ENCODE measurements at regions of chr22 and their contacts with region 1.

Region 1: DNA sequence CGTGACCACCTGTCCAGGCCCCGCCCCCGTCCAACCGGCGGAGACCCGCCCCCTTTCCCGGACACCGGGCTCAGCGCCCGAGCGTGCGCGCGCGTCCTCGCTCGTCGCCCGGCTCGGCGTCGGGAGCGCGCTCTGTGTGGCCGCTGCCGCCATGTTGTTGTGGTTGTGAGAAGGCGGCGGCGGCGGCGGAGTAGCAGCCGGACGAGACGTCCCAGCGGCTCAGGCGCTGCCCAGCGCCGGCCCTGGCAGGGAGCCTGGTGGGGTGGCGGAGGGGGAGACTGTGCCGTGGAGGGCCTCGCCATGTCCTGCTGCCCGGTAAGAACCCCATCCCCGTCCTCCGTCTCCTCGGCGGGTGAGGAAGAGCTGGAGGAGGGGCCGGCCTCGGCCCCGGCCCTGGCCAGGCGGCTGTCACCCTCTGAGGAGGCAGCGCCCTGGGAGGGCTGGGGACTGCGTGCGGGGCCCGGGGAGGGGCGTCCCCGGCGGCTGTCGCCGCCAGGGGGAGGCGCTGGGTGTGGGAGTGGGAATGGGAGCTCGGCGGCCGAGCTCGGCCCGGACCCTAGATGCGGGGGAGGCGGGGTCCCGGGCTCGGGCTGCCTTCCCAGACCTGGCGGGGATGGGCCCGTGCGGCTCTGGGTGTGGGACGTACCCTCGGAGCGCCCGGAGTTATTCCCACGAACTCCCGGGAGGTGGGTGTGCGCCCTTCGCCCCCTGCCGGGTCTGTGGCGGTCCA is at the start of gene MTMR3:
- DNase-seq: peak; percentile 93 to 97
- H3K4me3 ChIP-seq: peak within 1 kb of the TSS; percentile 81
- H3K4me3 Mint-ChIP-seq: peak within 1 kb of the TSS; percentile 74
- H3K27ac Mint-ChIP-seq: no peak within 1 kb of the TSS
- H3K4me1 ChIP-seq: 0 out of 2 replicates have a peak, but pooled peaks cover 3% of the 10 kb centered on the region
- H3K4me1 Mint-ChIP-seq: no peaks in the 10 kb centered on the region
- H3K27me3 ChIP-seq: no peaks in the 10 kb centered on the region
- H3K27me3 Mint-ChIP-seq: no peaks in the 10 kb centered on the region
- CTCF ChIP-seq: peak; percentile 47 to 57
- total RNA-seq, gene MTMR3: 27.3 and 30.2 TPM in 2 replicates

Region 2: GRCh38 chr22:29670626-29671025 is 212.6 kb before region 1 on chr22:
- CTCF ChIA-PET with region 1: no interaction called
- POLR2A ChIA-PET with region 1: no interaction called
- intact Hi-C with region 1: no loop called
- DNase-seq: no peak
- H3K4me3 ChIP-seq: no peak overlapping the region
- H3K4me3 Mint-ChIP-seq: no peak overlapping the region
- H3K27ac Mint-ChIP-seq: no peak overlapping the region
- H3K4me1 ChIP-seq: no peaks in the 10 kb centered on the region
- H3K4me1 Mint-ChIP-seq: no peaks in the 10 kb centered on the region
- H3K27me3 ChIP-seq: no peaks in the 10 kb centered on the region
- H3K27me3 Mint-ChIP-seq: no peaks in the 10 kb centered on the region
- CTCF ChIP-seq: no peak

Region 3: GRCh38 chr22:29837780-29838598 is 45.2 kb before region 1 on chr22 and contains the start of gene ASCC2:
- CTCF ChIA-PET with region 1: interaction called, 15 read pairs
- POLR2A ChIA-PET with region 1: interaction called, 5 read pairs
- intact Hi-C with region 1: no loop called
- DNase-seq: peak; percentile 98
- H3K4me3 ChIP-seq: peak within 1 kb of the TSS; percentile 97
- H3K4me3 Mint-ChIP-seq: peak within 1 kb of the TSS; percentile 83
- H3K27ac Mint-ChIP-seq: peak within 1 kb of the TSS; percentile 69
- H3K4me1 ChIP-seq: peaks cover 5% of the 10 kb centered on the region; the same call in 1 of the 2 replicates
- H3K4me1 Mint-ChIP-seq: peaks cover 10% of the 10 kb centered on the region
- H3K27me3 ChIP-seq: no peaks in the 10 kb centered on the region
- H3K27me3 Mint-ChIP-seq: no peaks in the 10 kb centered on the region
- CTCF ChIP-seq: no peak
- total RNA-seq, gene ASCC2: 61.4 and 68.8 TPM in 2 replicates

Region 4: DNA sequence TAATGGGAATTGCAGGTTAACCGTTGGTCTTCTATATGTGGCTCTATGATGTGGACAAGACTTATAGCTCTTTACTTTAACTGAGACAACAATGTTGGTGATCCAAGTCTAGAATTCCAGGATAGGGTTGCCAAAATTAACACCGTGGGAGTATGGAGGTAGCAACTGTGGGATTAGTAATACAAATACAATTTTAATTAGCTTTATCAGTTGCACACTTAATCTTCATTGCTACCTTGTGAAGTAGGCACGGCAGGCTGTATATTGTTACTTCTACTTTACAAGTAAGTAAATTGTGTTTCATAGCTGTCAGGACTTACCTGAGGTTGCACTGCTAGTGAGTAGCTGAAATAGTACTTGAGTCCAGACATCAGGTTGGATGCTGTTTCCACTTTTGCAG is 20.8 kb after region 1 on chr22:
- CTCF ChIA-PET with region 1: interaction called, 7 read pairs
- POLR2A ChIA-PET with region 1: interaction called, 10 read pairs
- intact Hi-C with region 1: no loop called
- DNase-seq: no peak
- H3K4me3 ChIP-seq: no peak overlapping the region
- H3K4me3 Mint-ChIP-seq: no peak overlapping the region
- H3K27ac Mint-ChIP-seq: no peak overlapping the region
- H3K4me1 ChIP-seq: peaks cover 19% of the 10 kb centered on the region
- H3K4me1 Mint-ChIP-seq: peaks cover 6% of the 10 kb centered on the region
- H3K27me3 ChIP-seq: no peaks in the 10 kb centered on the region
- H3K27me3 Mint-ChIP-seq: no peaks in the 10 kb centered on the region
- CTCF ChIP-seq: no peak

Region 5: DNA sequence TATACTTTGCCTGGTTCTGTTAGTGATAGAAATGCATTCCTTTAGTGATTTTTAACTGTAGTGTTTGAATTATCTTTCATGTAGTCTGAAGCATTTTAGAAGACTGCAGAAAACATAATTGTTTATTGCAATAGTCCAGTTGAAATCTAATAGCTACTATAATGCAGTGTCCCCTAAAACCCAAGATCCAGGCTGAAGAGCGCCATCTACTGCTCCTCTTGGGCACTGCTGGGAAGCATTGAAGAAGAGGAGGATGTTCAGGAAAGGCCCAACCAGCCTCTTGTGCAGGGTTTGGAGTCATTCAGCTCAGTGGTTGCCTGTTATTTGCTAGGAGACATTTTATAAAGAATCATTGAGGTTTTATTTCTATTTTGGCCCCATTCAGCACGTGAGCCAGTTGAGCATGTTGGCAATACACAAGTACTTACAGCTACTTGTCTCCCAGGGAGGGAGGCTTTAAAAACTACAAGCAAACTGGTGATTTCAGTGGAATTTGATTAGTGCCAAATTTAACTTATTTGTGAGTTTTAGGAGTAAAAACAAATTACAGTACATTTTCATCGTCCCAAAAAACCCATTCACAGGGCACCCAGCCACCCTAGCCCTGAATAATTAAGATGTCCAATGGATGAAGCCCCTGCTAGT is 122.1 kb after region 1 on chr22:
- CTCF ChIA-PET with region 1: interaction called, 18 read pairs
- POLR2A ChIA-PET with region 1: no interaction called
- intact Hi-C with region 1: loop called (anchors 1 kb)
- DNase-seq: peak; percentile 49 to 73
- H3K4me3 ChIP-seq: no peak overlapping the region
- H3K4me3 Mint-ChIP-seq: no peak overlapping the region
- H3K27ac Mint-ChIP-seq: no peak overlapping the region
- H3K4me1 ChIP-seq: peaks cover 3% of the 10 kb centered on the region; the same call in 1 of the 2 replicates
- H3K4me1 Mint-ChIP-seq: no peaks in the 10 kb centered on the region
- H3K27me3 ChIP-seq: no peaks in the 10 kb centered on the region
- H3K27me3 Mint-ChIP-seq: no peaks in the 10 kb centered on the region
- CTCF ChIP-seq: peak; percentile 91 to 95

Region 6: GRCh38 chr22:30127749-30128166 is 244.5 kb after region 1 on chr22:
- CTCF ChIA-PET with region 1: no interaction called
- POLR2A ChIA-PET with region 1: interaction called, 13 read pairs
- intact Hi-C with region 1: no loop called
- DNase-seq: peak in 1 of 2 experiments; percentile 27
- H3K4me3 ChIP-seq: no peak overlapping the region
- H3K4me3 Mint-ChIP-seq: no peak overlapping the region
- H3K27ac Mint-ChIP-seq: no peak overlapping the region
- H3K4me1 ChIP-seq: peaks cover 10% of the 10 kb centered on the region
- H3K4me1 Mint-ChIP-seq: no peaks in the 10 kb centered on the region
- H3K27me3 ChIP-seq: no peaks in the 10 kb centered on the region
- H3K27me3 Mint-ChIP-seq: no peaks in the 10 kb centered on the region
- CTCF ChIP-seq: no peak